Natural killer cell (primary cell): ENCODE measurements at regions of chr17 and their contacts with region 1.

Region 1: GRCh38 chr17:5486204-5487124 is at the start of gene MIS12:
- DNase-seq: peak; percentile 92 to 98
- ATAC-seq: peak; percentile 87 to 94 (median 87)
- H3K4me3 ChIP-seq: peak within 1 kb of the TSS; percentile 97
- H3K4me3 Mint-ChIP-seq: peak within 1 kb of the TSS; percentile 96
- H3K27ac ChIP-seq: peak within 1 kb of the TSS; percentile 100
- H3K27ac Mint-ChIP-seq: peak within 1 kb of the TSS; percentile 95 to 98
- H3K4me1 ChIP-seq: peaks cover 16% of the 10 kb centered on the region
- H3K4me1 Mint-ChIP-seq: peaks cover 28 to 43% of the 10 kb centered on the region in 2 donors
- H3K27me3 ChIP-seq: no peaks in the 10 kb centered on the region
- H3K27me3 Mint-ChIP-seq: no peaks in the 10 kb centered on the region
- CTCF ChIP-seq: no peak
- total RNA-seq, gene MIS12: 26.8 to 35.3 (median 29.3) TPM

Region 2: GRCh38 chr17:5468075-5468473 is 18.4 kb before region 1 on chr17:
- intact Hi-C with region 1: loop called (anchors 2 kb)
- DNase-seq: peak in 1 of 2 donors; percentile 43
- ATAC-seq: peak; percentile 15 to 38 (median 19)
- H3K4me3 ChIP-seq: peak overlapping the region; percentile 82
- H3K4me3 Mint-ChIP-seq: peak overlapping the region; percentile 51
- H3K27ac ChIP-seq: no peak overlapping the region
- H3K27ac Mint-ChIP-seq: peak overlapping the region; percentile 7 to 29
- H3K4me1 ChIP-seq: peaks cover 22% of the 10 kb centered on the region
- H3K4me1 Mint-ChIP-seq: peaks cover 30 to 38% of the 10 kb centered on the region in 2 donors
- H3K27me3 ChIP-seq: no peaks in the 10 kb centered on the region
- H3K27me3 Mint-ChIP-seq: no peaks in the 10 kb centered on the region
- CTCF ChIP-seq: no peak

Region 3: GRCh38 chr17:5820721-5821456 is 334.4 kb after region 1 on chr17:
- intact Hi-C with region 1: no loop called
- DNase-seq: no peak
- ATAC-seq: no peak
- H3K4me3 ChIP-seq: no peak overlapping the region
- H3K4me3 Mint-ChIP-seq: no peak overlapping the region
- H3K27ac ChIP-seq: no peak overlapping the region
- H3K27ac Mint-ChIP-seq: no peak overlapping the region
- H3K4me1 ChIP-seq: no peaks in the 10 kb centered on the region
- H3K4me1 Mint-ChIP-seq: no peaks in the 10 kb centered on the region
- H3K27me3 ChIP-seq: no peaks in the 10 kb centered on the region
- H3K27me3 Mint-ChIP-seq: peaks cover 8 to 48% of the 10 kb centered on the region in 2 donors
- CTCF ChIP-seq: no peak